ENCODE measurements at regions of chr7 and their contacts with region 1.

Region 1: DNA sequence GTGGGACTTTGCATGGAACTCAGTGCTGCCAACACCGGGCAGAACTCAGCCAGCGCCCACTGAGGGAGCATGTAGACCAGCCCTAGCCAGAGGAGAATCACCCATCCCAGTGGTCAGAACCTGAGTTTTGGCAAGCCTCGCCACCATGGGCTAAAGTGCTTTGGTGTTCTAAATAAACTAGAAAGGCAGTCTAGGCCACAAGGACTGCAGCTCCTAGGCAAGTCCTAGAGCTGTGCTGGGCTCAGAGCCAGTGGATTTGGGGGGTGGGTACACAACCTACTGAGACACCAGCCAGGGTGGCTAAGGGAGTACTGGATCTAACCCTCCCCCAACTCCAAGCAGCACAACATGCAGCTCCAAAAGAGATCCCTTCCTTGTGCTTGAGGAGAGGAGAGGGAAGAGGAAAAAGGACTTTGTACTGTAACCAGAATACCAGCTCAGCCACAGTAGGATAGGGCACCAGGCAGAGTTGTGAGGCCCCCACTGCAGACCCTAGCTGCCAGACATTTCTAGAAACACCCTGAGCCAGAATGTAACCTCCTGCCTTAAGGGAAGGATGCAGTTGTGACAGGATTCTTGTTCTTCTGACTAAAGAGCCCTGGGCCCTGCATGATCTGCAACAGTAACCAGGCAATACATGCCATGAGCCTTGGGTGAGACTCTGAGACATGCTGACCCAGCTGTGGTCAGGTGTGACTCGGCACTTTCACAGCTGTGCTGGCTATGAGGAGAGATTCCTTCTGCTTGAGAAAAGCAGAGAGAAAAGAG is 24.4 kb downstream of the GSDME start:
- DNase-seq: peak; percentile 89
- H3K4me3 ChIP-seq: no peak overlapping the region
- H3K27ac ChIP-seq: peak overlapping the region; percentile 82
- H3K4me1 ChIP-seq: peaks cover 21% of the 10 kb centered on the region
- H3K27me3 ChIP-seq: no peaks in the 10 kb centered on the region
- CTCF ChIP-seq: no peak

Region 2: GRCh38 chr7:24786941-24787340 is 54.1 kb after region 1 on chr7:
- CTCF ChIA-PET with region 1: no interaction called
- dilution Hi-C with region 1: no loop called
- in situ Hi-C with region 1: no loop called
- intact Hi-C with region 1: loop called (anchors 2 kb)
- DNase-seq: peak; percentile 97
- H3K4me3 ChIP-seq: no peak overlapping the region
- H3K27ac ChIP-seq: peak overlapping the region; percentile 47
- H3K4me1 ChIP-seq: peaks cover 11% of the 10 kb centered on the region
- H3K27me3 ChIP-seq: no peaks in the 10 kb centered on the region
- CTCF ChIP-seq: no peak

Region 3: DNA sequence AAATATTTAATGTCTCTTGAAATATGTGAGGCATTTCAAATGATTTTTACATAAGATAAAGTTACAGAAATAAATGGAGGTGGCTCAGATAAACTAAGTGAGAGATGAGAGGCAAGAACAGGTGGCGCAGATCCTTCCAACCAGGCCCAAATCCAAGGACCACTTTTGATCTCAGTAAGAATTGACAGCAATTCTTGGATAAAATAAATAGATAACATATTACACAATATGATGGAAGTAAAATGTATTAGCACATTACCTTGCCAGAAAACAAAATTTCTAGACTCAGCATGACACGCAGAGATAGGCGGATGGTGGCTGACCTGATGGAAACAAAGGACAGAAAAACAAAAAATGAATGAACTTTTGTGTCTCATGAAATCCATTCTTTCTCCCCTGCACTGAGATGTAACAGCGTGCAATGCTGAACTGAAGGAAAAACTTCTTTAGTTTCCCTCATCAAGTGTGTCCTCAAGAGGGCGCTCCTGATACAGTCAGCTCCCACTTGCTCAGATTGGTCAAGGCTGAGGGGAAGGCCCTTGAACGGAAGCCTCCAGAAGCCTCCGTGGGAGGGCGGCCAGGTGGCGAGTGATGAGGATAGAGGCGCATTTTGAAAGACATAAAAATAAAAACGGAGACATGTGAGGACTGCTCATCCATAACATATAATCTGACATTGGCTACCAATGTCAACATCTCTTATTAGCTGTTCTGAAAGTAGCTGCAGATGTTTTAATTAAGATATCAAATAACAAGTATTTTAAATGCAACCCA is 87.3 kb after region 1 on chr7:
- CTCF ChIA-PET with region 1: no interaction called
- dilution Hi-C with region 1: no loop called
- in situ Hi-C with region 1: no loop called
- intact Hi-C with region 1: no loop called
- DNase-seq: peak; percentile 82
- H3K4me3 ChIP-seq: no peak overlapping the region
- H3K27ac ChIP-seq: peak overlapping the region; percentile 98
- H3K4me1 ChIP-seq: peaks cover 36% of the 10 kb centered on the region
- H3K27me3 ChIP-seq: no peaks in the 10 kb centered on the region
- CTCF ChIP-seq: peak; percentile 94